ENCODE measurements at regions of chr1 and their contacts with region 1.

Region 1: GRCh38 chr1:983799-984473 is 2.0 kb upstream of the PERM1 start:
- DNase-seq: no peak

Region 2: DNA sequence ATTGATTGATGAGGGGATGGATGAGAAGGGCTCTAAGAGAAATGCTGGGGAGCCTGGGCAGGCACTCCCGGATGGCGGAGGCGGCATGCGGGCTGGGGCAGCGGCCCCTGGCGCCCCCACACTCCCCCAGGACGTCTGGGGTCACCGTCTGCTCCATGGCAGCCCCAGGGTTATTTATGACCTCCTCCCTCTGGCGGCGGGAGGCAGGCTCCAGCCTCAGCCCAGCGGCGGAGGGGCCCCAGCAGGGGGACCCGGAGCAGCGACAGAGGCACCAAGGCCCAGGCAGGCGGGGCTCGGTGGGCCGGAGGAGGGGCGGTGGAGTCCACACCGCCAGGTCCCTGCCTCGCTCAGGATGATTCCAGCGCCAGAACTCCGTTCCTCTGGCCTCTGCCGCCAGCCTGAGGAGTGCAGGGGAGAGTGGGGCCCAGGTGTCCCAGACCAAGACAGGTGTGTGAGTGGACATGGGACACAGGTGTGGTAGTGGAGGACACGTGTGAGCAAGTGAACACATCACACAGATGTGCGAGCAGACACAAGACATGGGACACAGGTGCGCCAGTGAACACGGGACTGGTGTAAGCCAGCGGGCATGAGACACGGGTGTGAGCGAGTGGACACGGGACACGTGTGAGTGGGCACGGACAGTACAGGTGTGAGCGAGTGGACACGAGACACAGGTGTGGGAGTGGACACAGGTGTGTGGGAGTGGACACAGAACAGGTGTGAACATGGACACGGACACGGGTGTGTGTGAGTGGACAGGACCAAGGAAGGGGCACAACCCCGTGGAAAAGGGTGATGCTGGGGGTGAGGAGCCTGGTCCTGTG is 62.7 kb before region 1 on chr1:
- intact Hi-C with region 1: no loop called
- DNase-seq: no peak

Region 3: GRCh38 chr1:1059494-1060280 is 75.8 kb after region 1 on chr1:
- intact Hi-C with region 1: loop called in 1 of 2 experiments (anchors 5 kb)
- DNase-seq: peak; percentile 97